ENCODE measurements at regions of chr3 and their contacts with region 1.

Region 1: DNA sequence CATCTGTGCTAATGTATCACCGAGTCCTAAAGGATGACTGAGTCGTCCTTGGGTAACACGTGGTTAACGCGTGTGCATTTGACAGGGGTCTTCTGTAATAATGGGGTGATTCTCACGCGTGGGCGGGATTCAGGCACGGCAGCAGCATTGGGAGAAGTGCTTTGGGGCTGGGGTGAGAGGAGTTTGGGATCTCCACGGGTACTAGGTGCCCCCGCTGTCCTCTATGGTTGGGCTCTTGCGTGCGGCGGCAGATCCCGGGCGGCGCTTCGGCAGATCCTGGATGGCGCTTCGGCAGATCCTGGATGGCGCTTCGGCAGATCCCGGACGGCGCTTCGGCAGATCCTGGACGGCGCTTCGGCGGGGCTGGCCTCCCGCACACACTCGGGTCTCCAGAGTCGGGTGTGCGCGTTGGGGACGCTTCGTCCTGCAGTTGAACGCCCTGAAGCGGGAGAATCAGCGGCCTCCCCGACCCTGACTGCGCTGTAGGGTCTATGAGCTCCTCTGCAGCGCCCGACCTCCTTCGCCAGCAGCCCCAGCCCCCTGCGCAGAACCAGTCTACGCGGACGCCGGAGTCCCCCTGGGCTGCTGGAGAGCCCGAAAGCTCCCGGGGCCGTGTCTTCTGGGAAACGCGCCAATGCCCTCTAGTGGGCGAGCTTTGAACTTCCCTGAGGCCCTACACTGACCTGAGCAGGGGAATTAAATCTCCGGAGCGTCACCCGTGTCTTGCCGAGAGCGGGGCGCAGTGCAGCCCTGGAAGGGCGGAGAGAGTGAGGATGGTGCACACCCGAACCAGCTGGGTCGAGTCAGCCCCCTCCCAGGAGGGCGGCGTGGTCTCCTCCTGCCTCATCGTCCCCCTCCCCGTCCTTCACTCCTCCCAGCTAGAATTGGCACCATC is 48.1 kb upstream of the EPHB3 start:
- DNase-seq: peak; percentile 75
- ATAC-seq: peak; percentile 100
- H3K4me3 Mint-ChIP-seq: peak overlapping the region; percentile 57
- H3K27ac Mint-ChIP-seq: no peak overlapping the region
- H3K4me1 Mint-ChIP-seq: peaks cover 11% of the 10 kb centered on the region
- H3K27me3 Mint-ChIP-seq: peaks cover 41% of the 10 kb centered on the region
- CTCF ChIP-seq: no peak

Region 2: DNA sequence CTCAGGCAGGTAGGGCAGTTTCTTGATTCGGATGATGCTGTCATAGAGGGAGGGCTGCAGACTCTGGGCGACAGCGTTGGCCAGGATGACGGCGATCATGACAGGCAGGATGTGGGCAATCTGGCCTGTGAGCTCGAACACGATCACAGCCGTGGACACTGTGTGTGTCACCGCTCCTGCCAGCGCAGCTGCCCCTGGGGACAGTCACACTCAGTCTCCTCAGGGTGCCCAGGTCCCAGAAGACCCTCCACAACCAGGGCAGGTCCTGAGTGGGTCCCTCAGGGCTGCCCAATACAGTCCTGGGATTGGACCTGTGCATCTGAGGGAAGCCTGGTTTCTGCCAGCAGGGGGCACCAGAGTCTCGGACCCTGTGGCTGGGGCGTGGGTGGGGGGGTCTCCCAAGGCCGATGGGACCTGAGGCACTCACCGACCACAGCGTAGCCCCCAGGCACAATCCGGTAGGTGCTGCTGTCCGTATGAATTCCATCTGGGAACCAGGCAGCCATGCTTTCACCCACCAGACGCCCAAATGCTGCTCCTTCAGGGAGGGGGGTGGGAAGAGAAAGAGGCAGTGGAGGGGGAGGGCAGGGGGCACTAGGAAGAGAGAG is 159.3 kb before region 1 on chr3:
- CTCF ChIA-PET with region 1: interaction called, 24 read pairs
- POLR2A ChIA-PET with region 1: no interaction called
- intact Hi-C with region 1: loop called (anchors 1 kb)
- DNase-seq: peak; percentile 57
- ATAC-seq: peak; percentile 87
- H3K4me3 Mint-ChIP-seq: no peak overlapping the region
- H3K27ac Mint-ChIP-seq: no peak overlapping the region
- H3K4me1 Mint-ChIP-seq: no peaks in the 10 kb centered on the region
- H3K27me3 Mint-ChIP-seq: no peaks in the 10 kb centered on the region
- CTCF ChIP-seq: no peak

Region 3: DNA sequence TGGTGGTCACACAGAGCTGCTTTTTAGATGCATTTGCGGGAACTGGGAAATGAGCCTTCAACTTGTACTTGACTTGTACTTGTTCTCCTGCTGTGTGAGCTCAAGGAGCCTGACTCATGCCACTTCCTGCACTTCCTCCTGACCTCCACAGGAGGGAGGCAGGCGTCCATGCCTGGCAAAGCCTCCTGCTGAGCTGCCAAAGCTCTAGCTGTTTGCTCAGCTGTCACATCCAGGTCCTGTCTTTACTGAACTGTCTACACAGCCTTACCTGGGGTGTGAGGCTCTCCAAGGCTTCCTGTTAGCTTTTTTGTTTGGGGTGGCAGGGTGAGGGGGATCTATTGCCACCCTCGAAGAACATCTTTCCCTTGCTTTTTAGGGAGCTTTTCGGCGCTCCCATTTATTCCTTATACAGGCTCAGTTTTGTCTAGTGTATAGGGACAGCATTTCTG is 141.9 kb before region 1 on chr3:
- CTCF ChIA-PET with region 1: interaction called, 75 read pairs
- POLR2A ChIA-PET with region 1: no interaction called
- intact Hi-C with region 1: loop called (anchors 1 kb)
- DNase-seq: no peak
- ATAC-seq: peak; percentile 97
- H3K4me3 Mint-ChIP-seq: no peak overlapping the region
- H3K27ac Mint-ChIP-seq: no peak overlapping the region
- H3K4me1 Mint-ChIP-seq: peaks cover 2% of the 10 kb centered on the region
- H3K27me3 Mint-ChIP-seq: peaks cover 15% of the 10 kb centered on the region
- CTCF ChIP-seq: no peak

Region 4: GRCh38 chr3:184417619-184418327 is 95.8 kb before region 1 on chr3:
- CTCF ChIA-PET with region 1: interaction called, 7 read pairs
- POLR2A ChIA-PET with region 1: no interaction called
- intact Hi-C with region 1: loop called (anchors 1 kb)
- DNase-seq: peak; percentile 65
- ATAC-seq: peak; percentile 100
- H3K4me3 Mint-ChIP-seq: no peak overlapping the region
- H3K27ac Mint-ChIP-seq: no peak overlapping the region
- H3K4me1 Mint-ChIP-seq: peaks cover 2% of the 10 kb centered on the region
- H3K27me3 Mint-ChIP-seq: no peaks in the 10 kb centered on the region
- CTCF ChIP-seq: peak; percentile 71

Region 5: GRCh38 chr3:184496937-184497336 is 16.6 kb before region 1 on chr3:
- CTCF ChIA-PET with region 1: no interaction called
- POLR2A ChIA-PET with region 1: no interaction called
- intact Hi-C with region 1: no loop called
- DNase-seq: no peak
- ATAC-seq: no peak
- H3K4me3 Mint-ChIP-seq: no peak overlapping the region
- H3K27ac Mint-ChIP-seq: no peak overlapping the region
- H3K4me1 Mint-ChIP-seq: peaks cover 8% of the 10 kb centered on the region
- H3K27me3 Mint-ChIP-seq: peaks cover 51% of the 10 kb centered on the region
- CTCF ChIP-seq: no peak

Measured in activated B cell treated with CpG ODN at 0.5 μM for 24 hours (primary cell).